AG04450 (cell line): ENCODE measurements at regions of chr1 and their contacts with region 1.

Region 1: DNA sequence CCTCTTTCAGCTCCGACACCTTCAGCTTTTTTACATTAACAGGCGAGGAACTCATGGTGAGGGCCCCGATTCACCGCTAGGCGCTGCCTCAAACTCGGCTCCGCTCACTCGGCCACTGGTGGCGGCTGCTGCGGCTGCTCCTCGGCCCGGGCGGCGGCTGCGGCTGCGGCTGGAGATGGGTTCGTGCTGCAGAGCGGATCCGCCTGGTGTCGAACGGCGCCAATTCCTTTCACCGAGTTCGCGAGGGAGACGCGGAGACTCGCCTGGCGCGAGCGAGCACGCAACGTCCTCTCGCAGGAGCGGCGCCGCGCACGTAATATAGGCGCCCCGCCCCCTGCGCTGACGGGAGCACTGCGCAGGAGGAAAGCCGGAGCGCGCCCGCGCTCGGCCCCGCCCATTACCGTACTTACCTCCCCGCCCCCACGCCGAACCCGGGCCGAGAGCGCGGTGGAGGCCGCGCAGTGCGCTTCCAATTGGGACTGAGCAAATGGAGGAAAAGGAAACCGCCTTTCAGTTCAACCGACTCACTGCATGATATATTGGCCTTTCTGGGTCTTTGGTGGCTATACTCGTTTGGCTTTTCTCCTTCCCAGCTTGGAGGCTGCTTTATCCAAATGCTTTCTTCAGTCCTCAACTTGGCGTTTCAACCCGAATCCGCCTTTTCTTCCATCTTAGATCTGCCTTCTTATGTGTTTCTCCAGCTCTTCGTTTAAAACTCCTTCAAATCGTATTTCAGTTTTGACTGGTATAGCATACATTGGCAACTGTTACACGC is at the start of gene HNRNPU:
- DNase-seq: peak; percentile 94
- H3K4me3 ChIP-seq: peak within 1 kb of the TSS; percentile 88
- H3K27ac ChIP-seq: peak within 1 kb of the TSS; percentile 93
- H3K27me3 ChIP-seq: no peaks in the 10 kb centered on the region
- CTCF ChIP-seq: peak; percentile 42; the same call in 1 of the 2 replicates
- polyA plus RNA-seq, gene HNRNPU: 205 and 262 TPM in 2 replicates

Region 2: DNA sequence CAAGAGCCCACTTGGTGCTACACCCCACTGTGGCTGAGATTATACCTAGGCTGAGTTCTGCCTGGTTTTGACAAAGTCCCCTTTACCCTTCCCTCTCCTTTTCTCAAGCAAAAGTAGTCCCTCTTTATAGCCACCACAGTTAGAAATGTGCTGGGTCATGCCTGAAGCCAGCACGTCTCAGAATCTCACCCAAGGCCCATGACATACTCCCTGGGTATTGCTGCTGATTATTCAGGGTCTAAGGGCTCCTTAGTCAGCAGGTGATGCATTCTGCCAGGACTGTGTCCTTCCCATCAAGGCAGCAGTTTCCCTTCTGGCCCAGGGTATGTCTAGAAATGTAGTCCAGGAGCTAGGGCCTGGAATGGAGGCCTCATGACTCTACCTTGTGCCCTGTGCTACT is 96.3 kb before region 1 on chr1:
- CTCF ChIA-PET with region 1: no interaction called
- POLR2A ChIA-PET with region 1: no interaction called
- DNase-seq: no peak
- H3K4me3 ChIP-seq: no peak overlapping the region
- H3K27ac ChIP-seq: no peak overlapping the region
- H3K27me3 ChIP-seq: no peaks in the 10 kb centered on the region
- CTCF ChIP-seq: no peak

Region 3: GRCh38 chr1:244835276-244836134 is 28.9 kb before region 1 on chr1 and contains the start of gene COX20:
- CTCF ChIA-PET with region 1: interaction called, 4 read pairs
- POLR2A ChIA-PET with region 1: interaction called, 18 read pairs
- DNase-seq: peak; percentile 72
- H3K4me3 ChIP-seq: peak within 1 kb of the TSS; percentile 65
- H3K27ac ChIP-seq: peak within 1 kb of the TSS; percentile 99
- H3K27me3 ChIP-seq: no peaks in the 10 kb centered on the region
- CTCF ChIP-seq: no peak
- polyA plus RNA-seq, gene COX20: 25.4 and 45.8 TPM in 2 replicates

Region 4: DNA sequence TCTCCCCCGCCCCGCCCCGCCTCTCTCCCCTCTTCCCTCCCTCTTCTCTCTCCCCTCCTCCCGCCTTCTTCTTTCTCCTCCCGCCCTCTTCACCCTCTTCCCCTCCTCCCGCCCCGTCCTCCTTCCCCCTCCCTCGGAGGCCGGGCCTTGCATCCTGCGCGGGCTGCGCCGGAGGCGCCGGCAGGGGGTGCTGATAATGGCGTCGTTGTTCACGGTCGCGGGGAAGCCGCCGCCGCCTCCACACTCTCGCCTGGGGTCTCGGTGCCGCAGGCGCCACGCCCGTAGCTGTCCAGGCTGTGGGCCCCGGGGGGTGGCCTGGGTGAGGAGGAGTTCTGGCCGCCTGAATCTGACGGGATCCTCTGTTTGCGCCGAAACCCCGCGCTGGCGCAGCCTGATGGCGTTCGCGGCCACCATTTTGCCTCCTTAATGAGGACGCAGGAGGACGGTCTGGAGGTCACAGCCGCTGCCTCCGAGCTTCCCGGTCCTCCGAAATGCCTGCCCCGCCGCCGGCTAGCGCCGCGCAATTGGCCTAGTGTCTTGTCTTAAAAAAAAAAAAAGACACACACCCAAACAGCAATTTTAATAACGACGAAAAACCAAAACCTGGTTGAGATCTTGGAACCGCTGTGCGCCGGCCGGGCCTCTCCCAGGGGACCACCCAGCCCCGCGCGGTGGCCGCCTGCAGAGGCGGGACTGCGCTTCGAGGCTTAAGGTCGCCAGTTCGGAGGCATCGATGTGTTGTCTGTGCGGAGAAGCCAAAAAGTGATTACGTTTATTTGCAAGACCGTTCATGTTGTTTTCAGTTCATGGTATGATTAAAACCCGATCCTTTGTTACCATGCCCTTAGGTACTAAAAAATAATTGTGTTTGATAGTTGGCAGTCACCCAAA is 106.5 kb after region 1 on chr1:
- CTCF ChIA-PET with region 1: interaction called, 7 read pairs
- POLR2A ChIA-PET with region 1: interaction called, 42 read pairs
- DNase-seq: peak; percentile 91
- H3K4me3 ChIP-seq: peak overlapping the region; percentile 73
- H3K27ac ChIP-seq: peak overlapping the region; percentile 99
- H3K27me3 ChIP-seq: no peaks in the 10 kb centered on the region
- CTCF ChIP-seq: peak; percentile 64